MCF 10A (cell line): ENCODE measurements at regions of chr6 and their contacts with region 1.

Region 1: DNA sequence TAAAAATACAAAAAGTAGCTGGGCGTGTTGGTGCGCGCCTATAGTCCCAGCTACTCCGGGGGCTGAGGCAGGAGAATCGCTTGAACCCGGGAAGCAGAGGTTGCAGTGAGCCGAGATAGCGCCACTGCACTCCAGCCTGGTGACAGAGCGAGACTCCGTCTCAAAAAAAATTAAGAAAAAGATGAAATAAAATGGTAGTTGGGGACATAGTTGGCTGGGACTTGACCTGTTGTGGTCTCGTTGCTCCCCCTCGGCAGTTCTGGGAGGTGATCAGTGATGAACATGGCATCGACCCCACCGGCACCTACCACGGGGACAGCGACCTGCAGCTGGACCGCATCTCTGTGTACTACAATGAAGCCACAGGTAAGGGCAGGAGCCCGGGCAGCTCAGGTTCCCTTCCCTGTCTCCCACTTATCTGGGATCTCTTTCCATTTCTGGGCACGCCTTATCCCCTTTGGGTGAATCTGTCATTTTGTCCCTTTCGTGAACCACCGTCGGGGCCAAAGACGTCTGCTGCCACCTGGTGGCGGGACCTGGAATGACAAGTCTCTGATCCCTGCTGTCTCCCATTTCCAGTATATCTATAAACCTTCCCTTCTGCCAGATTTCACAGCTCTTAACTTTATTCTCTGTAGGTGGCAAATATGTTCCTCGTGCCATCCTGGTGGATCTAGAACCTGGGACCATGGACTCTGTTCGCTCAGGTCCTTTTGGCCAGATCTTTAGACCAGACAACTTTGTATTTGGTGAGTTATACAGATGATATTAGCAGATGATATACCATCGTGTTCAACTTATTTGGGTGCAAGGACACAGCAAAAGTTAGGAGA is 2.3 kb downstream of the TUBB start:
- DNase-seq: peak; percentile 86
- H3K4me3 Mint-ChIP-seq: peak overlapping the region; percentile 86
- H3K27ac Mint-ChIP-seq: no peak overlapping the region
- H3K4me1 Mint-ChIP-seq: peaks cover 45% of the 10 kb centered on the region
- H3K27me3 Mint-ChIP-seq: no peaks in the 10 kb centered on the region
- CTCF ChIP-seq: peak; percentile 97

Region 2: GRCh38 chr6:30646458-30647241 is 75.8 kb before region 1 on chr6 and contains the start of gene C6orf136:
- CTCF ChIA-PET with region 1: interaction called, 10 read pairs
- POLR2A ChIA-PET with region 1: interaction called, 7 read pairs
- intact Hi-C with region 1: no loop called
- DNase-seq: peak; percentile 91
- H3K4me3 Mint-ChIP-seq: peak within 1 kb of the TSS; percentile 81
- H3K27ac Mint-ChIP-seq: peak within 1 kb of the TSS; percentile 71
- H3K4me1 Mint-ChIP-seq: peaks cover 14% of the 10 kb centered on the region
- H3K27me3 Mint-ChIP-seq: no peaks in the 10 kb centered on the region
- CTCF ChIP-seq: no peak
- total RNA-seq, gene C6orf136: 10.3 and 15.7 TPM in 2 replicates

Region 3: GRCh38 chr6:30935018-30935417 is 212.5 kb after region 1 on chr6:
- CTCF ChIA-PET with region 1: no interaction called
- POLR2A ChIA-PET with region 1: no interaction called
- intact Hi-C with region 1: no loop called
- DNase-seq: peak; percentile 86
- H3K4me3 Mint-ChIP-seq: peak overlapping the region; percentile 2
- H3K27ac Mint-ChIP-seq: peak overlapping the region; percentile 94
- H3K4me1 Mint-ChIP-seq: peaks cover 45% of the 10 kb centered on the region
- H3K27me3 Mint-ChIP-seq: no peaks in the 10 kb centered on the region
- CTCF ChIP-seq: no peak

Region 4: DNA sequence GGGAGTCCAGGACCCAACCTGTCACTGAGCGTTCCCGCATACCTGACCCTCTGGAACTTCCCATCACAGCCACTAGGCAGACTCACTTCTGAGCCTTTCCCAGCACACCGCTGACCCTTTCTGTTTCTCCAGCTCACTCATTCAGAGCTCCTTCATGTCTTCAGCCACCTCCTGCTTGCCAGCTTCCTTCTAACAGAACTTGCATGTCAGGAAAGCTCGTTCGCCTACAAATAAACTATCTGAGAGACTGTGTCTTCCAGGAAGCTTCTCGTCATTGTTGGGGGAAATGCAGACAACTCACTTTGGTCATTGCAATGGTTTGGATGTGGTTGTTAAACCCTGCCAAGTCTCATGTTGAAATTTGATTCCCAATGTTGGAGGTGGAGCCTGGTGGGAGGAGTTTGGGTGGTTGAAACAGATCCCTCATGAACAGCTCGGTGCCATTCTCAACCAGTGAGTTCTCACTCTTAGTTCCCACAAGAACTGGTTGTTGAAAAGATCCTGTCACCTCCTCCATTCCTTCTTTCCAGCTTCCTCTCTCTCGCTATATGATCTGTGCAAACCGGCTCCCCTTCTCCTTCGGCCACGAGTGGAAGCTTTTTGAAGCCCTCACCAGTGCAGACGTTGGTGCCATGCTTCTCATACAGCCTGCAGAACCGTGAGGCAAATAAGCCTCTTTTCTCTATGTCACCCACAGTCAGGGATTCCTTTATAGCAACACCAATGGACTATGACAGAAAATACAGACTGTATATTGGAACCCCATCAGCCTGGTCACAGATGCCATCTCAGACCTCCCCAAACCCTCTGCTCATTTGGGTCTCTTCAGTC is 259.7 kb after region 1 on chr6:
- CTCF ChIA-PET with region 1: no interaction called
- POLR2A ChIA-PET with region 1: no interaction called
- intact Hi-C with region 1: no loop called
- DNase-seq: peak; percentile 81
- H3K4me3 Mint-ChIP-seq: peak overlapping the region; percentile 8
- H3K27ac Mint-ChIP-seq: no peak overlapping the region
- H3K4me1 Mint-ChIP-seq: peaks cover 25% of the 10 kb centered on the region
- H3K27me3 Mint-ChIP-seq: no peaks in the 10 kb centered on the region
- CTCF ChIP-seq: no peak

Region 5: GRCh38 chr6:31004285-31004684 is 281.8 kb after region 1 on chr6:
- CTCF ChIA-PET with region 1: no interaction called
- POLR2A ChIA-PET with region 1: no interaction called
- intact Hi-C with region 1: no loop called
- DNase-seq: no peak
- H3K4me3 Mint-ChIP-seq: no peak overlapping the region
- H3K27ac Mint-ChIP-seq: no peak overlapping the region
- H3K4me1 Mint-ChIP-seq: peaks cover 33% of the 10 kb centered on the region
- H3K27me3 Mint-ChIP-seq: no peaks in the 10 kb centered on the region
- CTCF ChIP-seq: no peak

Region 6: GRCh38 chr6:31366693-31367470 is 644.4 kb after region 1 on chr6:
- CTCF ChIA-PET with region 1: no interaction called
- POLR2A ChIA-PET with region 1: no interaction called
- intact Hi-C with region 1: no loop called
- DNase-seq: peak; percentile 90
- H3K4me3 Mint-ChIP-seq: peak overlapping the region; percentile 36
- H3K27ac Mint-ChIP-seq: no peak overlapping the region
- H3K4me1 Mint-ChIP-seq: no peaks in the 10 kb centered on the region
- H3K27me3 Mint-ChIP-seq: peaks cover 93% of the 10 kb centered on the region
- CTCF ChIP-seq: peak; percentile 80